CD4-positive, alpha-beta memory T cell (primary cell): ENCODE measurements at regions of chr11 and their contacts with region 1.

Region 1: GRCh38 chr11:83156150-83156995 is 558 bp upstream of the PCF11 start:
- DNase-seq: peak; percentile 94 to 99 (median 99)
- H3K4me3 ChIP-seq: peak overlapping the region; percentile 94 to 96
- H3K4me3 Mint-ChIP-seq: peak overlapping the region; percentile 99 to 100 (median 100)
- H3K27ac ChIP-seq: peak overlapping the region; percentile 98
- H3K27ac Mint-ChIP-seq: peak overlapping the region; percentile 99 to 100 (median 100)
- H3K4me1 ChIP-seq: peaks cover 23% of the 10 kb centered on the region
- H3K4me1 Mint-ChIP-seq: peaks cover 17 to 45% (median 28%) of the 10 kb centered on the region in 4 donors
- H3K27me3 ChIP-seq: no peaks in the 10 kb centered on the region
- H3K27me3 Mint-ChIP-seq: no peaks in the 10 kb centered on the region

Region 2: DNA sequence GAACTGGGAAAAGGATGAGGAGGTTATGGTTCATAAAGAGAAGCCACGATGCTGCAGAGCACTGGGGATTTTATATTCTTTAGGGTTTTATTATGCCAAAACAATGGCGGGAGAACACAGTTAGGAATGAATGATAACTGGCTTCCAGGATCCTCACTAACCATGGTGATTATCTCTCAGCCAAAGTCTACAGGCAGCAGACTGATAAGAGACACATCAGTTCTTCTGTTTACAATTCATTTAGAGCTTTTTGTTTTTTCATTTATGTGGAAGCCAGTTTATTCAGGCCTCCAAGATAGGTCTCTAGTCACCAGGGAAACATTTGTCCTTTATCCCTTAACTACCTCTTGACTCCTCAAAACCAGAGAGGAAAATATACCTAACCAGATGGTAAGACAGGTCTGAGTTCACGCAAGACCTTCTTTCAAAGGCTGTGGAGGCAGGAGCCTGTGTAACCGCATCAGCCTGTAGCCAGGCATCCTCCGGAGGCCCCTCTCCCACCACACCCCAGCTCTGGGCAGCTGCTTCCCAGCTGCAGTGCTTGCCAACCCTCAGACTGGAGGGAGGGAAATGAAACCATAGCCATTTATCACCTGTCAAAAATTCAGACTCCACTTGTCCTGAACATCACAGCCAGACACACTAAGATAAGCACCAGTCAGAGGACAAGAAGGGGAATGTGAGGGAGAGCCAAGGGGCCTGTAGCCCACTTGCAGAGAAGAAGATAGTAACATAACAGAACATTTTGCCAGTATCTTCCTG is 365.5 kb before region 1 on chr11:
- CTCF ChIA-PET with region 1: no interaction called
- POLR2A ChIA-PET with region 1: no interaction called
- intact Hi-C with region 1: no loop called
- DNase-seq: no peak
- H3K4me3 ChIP-seq: no peak overlapping the region
- H3K4me3 Mint-ChIP-seq: no peak overlapping the region
- H3K27ac ChIP-seq: no peak overlapping the region
- H3K27ac Mint-ChIP-seq: no peak overlapping the region
- H3K4me1 ChIP-seq: no peaks in the 10 kb centered on the region
- H3K4me1 Mint-ChIP-seq: no peaks in the 10 kb centered on the region
- H3K27me3 ChIP-seq: no peaks in the 10 kb centered on the region
- H3K27me3 Mint-ChIP-seq: no peaks in the 10 kb centered on the region

Region 3: GRCh38 chr11:82900277-82901164 is 255.9 kb before region 1 on chr11 and contains the start of gene PRCP:
- CTCF ChIA-PET with region 1: interaction called, 18 read pairs
- POLR2A ChIA-PET with region 1: interaction called, 124 read pairs
- intact Hi-C with region 1: loop called (anchors 1 kb)
- DNase-seq: peak; percentile 90 to 98 (median 94)
- H3K4me3 ChIP-seq: peak within 1 kb of the TSS; percentile 67 to 82
- H3K4me3 Mint-ChIP-seq: peak within 1 kb of the TSS; percentile 95 to 100 (median 98)
- H3K27ac ChIP-seq: peak within 1 kb of the TSS; percentile 92
- H3K27ac Mint-ChIP-seq: peak within 1 kb of the TSS; percentile 95 to 100 (median 100)
- H3K4me1 ChIP-seq: peaks cover 29% of the 10 kb centered on the region
- H3K4me1 Mint-ChIP-seq: peaks cover 14 to 40% (median 34%) of the 10 kb centered on the region in 4 donors
- H3K27me3 ChIP-seq: no peaks in the 10 kb centered on the region
- H3K27me3 Mint-ChIP-seq: no peaks in the 10 kb centered on the region
- total RNA-seq, gene PRCP: 24.1 to 28.0 TPM

Region 4: GRCh38 chr11:82959987-82960778 is 196.2 kb before region 1 on chr11:
- CTCF ChIA-PET with region 1: interaction called, 3 read pairs
- POLR2A ChIA-PET with region 1: interaction called, 92 read pairs
- intact Hi-C with region 1: loop called (anchors 1 kb)
- DNase-seq: peak; percentile 77 to 85 (median 82)
- H3K4me3 ChIP-seq: peak overlapping the region; percentile 13 to 39
- H3K4me3 Mint-ChIP-seq: peak overlapping the region; percentile 60 to 89 (median 80)
- H3K27ac ChIP-seq: peak overlapping the region; percentile 55
- H3K27ac Mint-ChIP-seq: peak overlapping the region; percentile 86 to 96 (median 95)
- H3K4me1 ChIP-seq: peaks cover 75% of the 10 kb centered on the region
- H3K4me1 Mint-ChIP-seq: peaks cover 57 to 88% (median 74%) of the 10 kb centered on the region in 4 donors
- H3K27me3 ChIP-seq: no peaks in the 10 kb centered on the region
- H3K27me3 Mint-ChIP-seq: no peaks in the 10 kb centered on the region

Region 5: GRCh38 chr11:83044958-83045712 is 111.2 kb before region 1 on chr11:
- CTCF ChIA-PET with region 1: no interaction called
- POLR2A ChIA-PET with region 1: no interaction called
- intact Hi-C with region 1: no loop called
- DNase-seq: peak in 1 of 5 donors; percentile 47
- H3K4me3 ChIP-seq: no peak overlapping the region
- H3K4me3 Mint-ChIP-seq: peak overlapping the region in 2 of 8 donors; percentile 4 to 31
- H3K27ac ChIP-seq: no peak overlapping the region
- H3K27ac Mint-ChIP-seq: peak overlapping the region in 3 of 7 donors; percentile 6 to 41 (median 9)
- H3K4me1 ChIP-seq: peaks cover 6% of the 10 kb centered on the region
- H3K4me1 Mint-ChIP-seq: peaks cover 8 to 16% (median 12%) of the 10 kb centered on the region in 4 donors
- H3K27me3 ChIP-seq: no peaks in the 10 kb centered on the region
- H3K27me3 Mint-ChIP-seq: no peaks in the 10 kb centered on the region

Region 6: GRCh38 chr11:83071567-83072349 is 84.6 kb before region 1 on chr11 and contains the start of gene RAB30:
- CTCF ChIA-PET with region 1: interaction called, 16 read pairs
- POLR2A ChIA-PET with region 1: interaction called, 188 read pairs
- intact Hi-C with region 1: loop called (anchors 1 kb)
- DNase-seq: peak; percentile 94 to 99 (median 96)
- H3K4me3 ChIP-seq: peak within 1 kb of the TSS; percentile 89 to 91
- H3K4me3 Mint-ChIP-seq: no peak within 1 kb of the TSS
- H3K27ac ChIP-seq: peak within 1 kb of the TSS; percentile 97
- H3K27ac Mint-ChIP-seq: no peak within 1 kb of the TSS
- H3K4me1 ChIP-seq: peaks cover 60% of the 10 kb centered on the region
- H3K4me1 Mint-ChIP-seq: peaks cover 6 to 39% (median 24%) of the 10 kb centered on the region in 4 donors
- H3K27me3 ChIP-seq: no peaks in the 10 kb centered on the region
- H3K27me3 Mint-ChIP-seq: no peaks in the 10 kb centered on the region
- total RNA-seq, gene RAB30: 12.3 to 14.1 TPM

Region 7: DNA sequence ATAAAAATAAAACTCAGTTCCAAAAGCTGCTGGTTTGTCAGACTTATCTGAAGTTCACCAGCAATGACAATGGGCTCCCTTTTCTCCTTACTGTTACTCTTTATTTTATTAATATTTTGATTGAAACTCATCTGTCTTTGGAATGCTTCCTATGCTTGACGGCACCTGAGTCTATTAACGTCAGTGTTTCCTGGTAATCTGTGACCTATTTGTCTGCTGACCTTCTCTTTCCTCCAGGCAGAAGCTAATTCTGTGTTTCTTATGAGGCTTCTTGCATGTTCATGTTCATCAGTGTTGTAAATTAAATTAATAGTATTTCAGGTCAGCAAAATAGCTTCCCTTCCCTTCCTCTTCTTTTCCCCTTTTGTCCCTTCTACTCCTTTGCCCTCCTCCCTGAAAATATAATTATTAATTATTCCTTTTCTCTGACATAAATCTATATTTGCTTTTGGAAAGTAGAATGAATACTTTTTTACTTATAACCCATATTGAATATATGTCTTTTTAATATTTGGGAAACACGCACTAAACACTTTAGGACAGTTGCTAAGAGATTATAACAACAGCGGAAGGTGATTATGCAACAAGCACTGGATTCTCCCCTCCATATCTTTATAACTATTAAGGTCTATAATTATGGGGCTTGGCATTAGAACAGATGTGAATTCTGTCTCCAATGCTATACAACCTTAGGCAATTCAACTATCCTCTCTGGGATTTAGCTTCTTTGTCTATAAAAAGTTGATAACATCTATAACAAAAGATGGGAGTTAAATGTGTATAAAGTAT is 31.5 kb before region 1 on chr11:
- CTCF ChIA-PET with region 1: no interaction called
- POLR2A ChIA-PET with region 1: interaction called, 92 read pairs
- intact Hi-C with region 1: no loop called
- DNase-seq: no peak
- H3K4me3 ChIP-seq: no peak overlapping the region
- H3K4me3 Mint-ChIP-seq: no peak overlapping the region
- H3K27ac ChIP-seq: no peak overlapping the region
- H3K27ac Mint-ChIP-seq: no peak overlapping the region
- H3K4me1 ChIP-seq: peaks cover 24% of the 10 kb centered on the region
- H3K4me1 Mint-ChIP-seq: peaks cover 16 to 29% (median 21%) of the 10 kb centered on the region in 4 donors
- H3K27me3 ChIP-seq: no peaks in the 10 kb centered on the region
- H3K27me3 Mint-ChIP-seq: no peaks in the 10 kb centered on the region

Region 8: GRCh38 chr11:83181815-83182214 is 25.4 kb after region 1 on chr11:
- CTCF ChIA-PET with region 1: interaction called, 3 read pairs
- POLR2A ChIA-PET with region 1: interaction called, 59 read pairs
- intact Hi-C with region 1: no loop called
- DNase-seq: no peak
- H3K4me3 ChIP-seq: no peak overlapping the region
- H3K4me3 Mint-ChIP-seq: peak overlapping the region in 1 of 8 donors; percentile 2
- H3K27ac ChIP-seq: no peak overlapping the region
- H3K27ac Mint-ChIP-seq: peak overlapping the region in 3 of 7 donors; percentile 36 to 76 (median 74)
- H3K4me1 ChIP-seq: peaks cover 12% of the 10 kb centered on the region
- H3K4me1 Mint-ChIP-seq: peaks cover 9 to 24% (median 14%) of the 10 kb centered on the region in 4 donors
- H3K27me3 ChIP-seq: no peaks in the 10 kb centered on the region
- H3K27me3 Mint-ChIP-seq: no peaks in the 10 kb centered on the region

Region 9: DNA sequence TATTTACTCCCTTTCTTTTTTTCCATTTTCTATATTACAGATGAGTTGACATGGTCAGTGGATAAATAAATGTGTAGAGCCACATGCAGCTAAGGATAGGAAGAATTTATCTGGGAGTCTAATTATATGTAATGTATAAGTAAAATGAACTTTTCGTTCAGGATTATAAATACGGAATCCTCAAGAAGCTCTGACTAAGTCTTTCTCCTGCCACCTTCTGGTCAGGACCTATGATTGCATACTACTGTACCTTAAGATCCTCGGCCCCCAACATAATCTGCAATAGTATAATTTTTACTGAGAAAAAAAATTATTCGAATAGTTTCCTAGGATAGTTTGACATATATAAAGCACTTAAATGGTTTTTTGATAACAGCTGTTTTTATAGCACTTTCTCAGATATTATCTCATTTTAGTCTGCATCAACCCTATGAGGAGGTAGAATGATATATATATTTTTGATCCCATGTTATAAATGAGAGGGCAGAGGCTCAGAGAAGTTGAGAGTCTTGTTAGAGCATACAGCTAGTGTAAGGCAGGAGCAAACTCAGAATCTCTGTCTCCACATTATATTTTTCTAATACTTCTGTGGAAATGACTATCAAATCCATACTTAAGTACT is 93.7 kb after region 1 on chr11:
- CTCF ChIA-PET with region 1: interaction called, 11 read pairs
- POLR2A ChIA-PET with region 1: interaction called, 11 read pairs
- intact Hi-C with region 1: loop called (anchors 1 kb)
- DNase-seq: peak in 4 of 5 donors; percentile 28 to 43 (median 38)
- H3K4me3 ChIP-seq: no peak overlapping the region
- H3K4me3 Mint-ChIP-seq: no peak overlapping the region
- H3K27ac ChIP-seq: no peak overlapping the region
- H3K27ac Mint-ChIP-seq: no peak overlapping the region
- H3K4me1 ChIP-seq: no peaks in the 10 kb centered on the region
- H3K4me1 Mint-ChIP-seq: peaks cover 0 to 4% (median 2%) of the 10 kb centered on the region in 4 donors
- H3K27me3 ChIP-seq: no peaks in the 10 kb centered on the region
- H3K27me3 Mint-ChIP-seq: no peaks in the 10 kb centered on the region